ENCODE measurements at regions of chr7 and their contacts with region 1.

Region 1: DNA sequence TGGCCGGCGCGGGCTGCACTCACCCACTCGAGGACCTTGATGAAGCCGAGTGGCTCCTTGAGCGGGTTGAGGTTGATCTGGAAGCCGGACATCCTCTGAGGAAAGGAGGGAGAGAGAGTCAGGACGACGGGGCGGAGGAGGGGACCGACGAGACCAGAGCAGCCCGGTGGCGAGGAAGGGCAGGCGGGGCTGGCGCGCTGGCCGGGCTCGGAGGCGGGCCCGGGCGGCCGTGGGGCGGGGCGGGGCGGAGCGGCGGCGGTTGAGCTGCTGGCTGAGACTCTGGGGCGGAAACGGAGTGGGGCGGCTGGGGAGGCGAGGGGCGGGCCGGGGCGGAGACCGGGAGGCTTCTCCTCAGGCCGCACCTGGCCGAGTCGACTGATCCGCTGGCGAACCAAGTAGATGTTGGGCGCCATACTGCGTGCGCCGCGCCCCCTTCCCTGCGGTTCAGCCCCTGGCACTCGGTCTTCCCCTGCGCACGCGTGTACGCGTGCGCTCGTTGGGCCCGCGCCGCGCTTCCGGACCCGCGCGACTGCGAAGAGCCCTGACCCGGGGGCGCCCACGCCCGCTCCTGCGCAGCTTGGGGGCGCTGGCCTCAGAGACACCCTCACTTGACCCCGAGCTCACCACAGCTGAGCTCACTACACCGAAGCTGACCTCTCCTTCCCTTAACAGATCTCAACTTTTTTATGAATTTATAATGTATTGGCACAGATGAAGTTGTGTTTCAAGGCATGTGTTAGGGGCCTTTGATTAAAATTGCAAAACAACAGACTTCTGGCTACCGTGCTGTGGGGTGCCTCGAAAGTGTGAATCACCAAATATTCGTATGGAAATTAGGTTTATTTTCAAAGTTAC is at the start of gene SYPL1:
- DNase-seq: peak; percentile 94 to 97 (median 97)
- ATAC-seq: peak; percentile 96 to 97
- H3K4me3 ChIP-seq: peak within 1 kb of the TSS; percentile 79
- H3K27ac ChIP-seq: peak within 1 kb of the TSS; percentile 99
- H3K4me1 ChIP-seq: peaks cover 6% of the 10 kb centered on the region
- H3K27me3 ChIP-seq: no peaks in the 10 kb centered on the region
- total RNA-seq, gene SYPL1: 72.2 to 86.9 (median 79.7) TPM

Region 2: DNA sequence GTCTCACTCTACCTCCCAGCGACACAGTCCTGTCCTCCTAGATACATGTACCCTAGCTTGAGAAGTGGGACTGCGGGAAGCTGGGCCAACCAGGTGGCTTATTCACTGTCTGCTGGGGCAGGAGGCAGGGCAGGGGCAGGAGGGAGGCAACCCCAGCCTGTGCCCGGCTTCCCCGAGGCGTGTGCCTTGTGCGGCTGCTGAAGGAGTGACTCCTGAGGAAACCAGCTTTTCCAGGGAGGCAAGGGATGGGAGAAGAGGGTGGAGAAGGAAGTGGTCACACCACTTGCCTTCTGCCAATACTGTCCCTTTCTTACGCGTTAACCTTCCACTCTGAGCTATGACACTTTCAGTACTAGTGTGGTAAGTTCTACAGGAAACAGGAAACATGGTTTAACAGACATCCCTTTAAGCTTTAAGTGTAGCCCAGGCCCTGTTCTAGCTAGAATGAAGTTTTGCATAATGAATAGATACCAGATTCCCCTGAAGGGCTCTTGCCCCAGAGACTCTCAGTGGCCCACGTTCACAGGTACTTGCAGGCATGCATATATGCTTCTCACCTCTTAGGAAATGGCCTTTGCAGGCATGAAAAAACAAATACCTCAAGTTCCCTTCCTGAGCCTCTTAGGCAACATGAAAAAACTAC is 40.9 kb before region 1 on chr7:
- intact Hi-C with region 1: loop called in 1 of 4 experiments (anchors 5 kb)
- DNase-seq: peak in 1 of 3 donors; percentile 39
- ATAC-seq: peak; percentile 71 to 87
- H3K4me3 ChIP-seq: no peak overlapping the region
- H3K27ac ChIP-seq: peak overlapping the region; percentile 75
- H3K4me1 ChIP-seq: peaks cover 18% of the 10 kb centered on the region
- H3K27me3 ChIP-seq: no peaks in the 10 kb centered on the region

Region 3: GRCh38 chr7:106405697-106406141 is 293.4 kb after region 1 on chr7:
- intact Hi-C with region 1: no loop called
- DNase-seq: no peak
- ATAC-seq: no peak
- H3K4me3 ChIP-seq: no peak overlapping the region
- H3K27ac ChIP-seq: no peak overlapping the region
- H3K4me1 ChIP-seq: no peaks in the 10 kb centered on the region
- H3K27me3 ChIP-seq: no peaks in the 10 kb centered on the region

Measured in right cardiac atrium (tissue), 5 donors.